Esophagus muscularis mucosa (tissue), 4 donors: ENCODE measurements at regions of chr1 and their contacts with region 1.

Region 1: GRCh38 chr1:89483010-89483756 is 41.4 kb upstream of the LRRC8B start:
- DNase-seq: no peak
- H3K4me3 ChIP-seq: no peak overlapping the region
- H3K27ac ChIP-seq: no peak overlapping the region
- H3K4me1 ChIP-seq: no peaks in the 10 kb centered on the region
- H3K27me3 ChIP-seq: no peaks in the 10 kb centered on the region
- CTCF ChIP-seq: peak; percentile 55 to 73 (median 69)
- EP300 ChIP-seq: no peak
- POLR2A ChIP-seq: no peak

Region 2: DNA sequence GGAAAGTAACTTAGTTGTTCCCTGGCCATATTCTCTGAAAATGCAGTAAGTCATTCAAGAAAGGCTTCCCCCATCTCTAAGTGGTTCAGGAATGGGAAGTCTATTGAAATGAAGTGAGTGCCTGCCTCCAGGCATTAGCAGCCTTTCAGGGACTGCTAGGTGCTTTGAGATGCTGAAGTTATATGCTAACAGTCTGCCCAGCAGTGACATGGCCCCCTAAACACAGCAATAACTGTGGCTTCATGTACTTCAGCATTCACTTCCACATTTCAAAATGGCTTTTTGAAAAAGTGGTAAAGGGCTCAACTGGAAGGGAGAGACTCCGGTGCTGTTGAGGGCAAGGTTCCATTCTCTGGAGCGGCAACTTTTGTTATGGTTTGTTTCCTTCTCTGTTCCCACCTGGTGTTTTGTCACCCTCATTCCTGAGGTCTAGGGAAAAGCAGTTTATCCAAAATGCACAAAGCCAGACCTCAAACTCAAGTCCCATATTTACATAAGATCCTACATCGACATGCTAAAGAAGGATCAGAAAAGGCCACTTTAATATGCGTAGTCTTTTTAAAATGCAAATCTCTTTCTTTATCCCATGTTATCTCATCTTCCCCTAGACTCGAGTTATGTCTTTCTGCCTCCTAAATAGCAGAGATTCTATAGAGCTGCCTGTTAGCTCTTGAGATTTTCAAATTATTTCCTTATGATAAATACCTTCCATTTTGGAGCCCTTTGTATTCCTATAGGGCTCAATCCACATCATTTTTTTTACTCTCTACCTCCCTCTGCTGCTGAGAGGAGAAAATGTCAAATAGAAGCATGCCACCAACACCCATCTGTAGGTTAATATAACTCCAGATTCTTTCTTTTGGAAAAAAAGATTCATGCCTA is 115.5 kb after region 1 on chr1:
- intact Hi-C with region 1: loop called (anchors 2 kb)
- DNase-seq: no peak
- H3K4me3 ChIP-seq: no peak overlapping the region
- H3K27ac ChIP-seq: no peak overlapping the region
- H3K4me1 ChIP-seq: peaks cover 0 to 4% (median 0%) of the 10 kb centered on the region in 4 donors
- H3K27me3 ChIP-seq: no peaks in the 10 kb centered on the region
- CTCF ChIP-seq: peak; percentile 65 to 66 (median 66)
- EP300 ChIP-seq: no peak
- POLR2A ChIP-seq: no peak

Region 3: DNA sequence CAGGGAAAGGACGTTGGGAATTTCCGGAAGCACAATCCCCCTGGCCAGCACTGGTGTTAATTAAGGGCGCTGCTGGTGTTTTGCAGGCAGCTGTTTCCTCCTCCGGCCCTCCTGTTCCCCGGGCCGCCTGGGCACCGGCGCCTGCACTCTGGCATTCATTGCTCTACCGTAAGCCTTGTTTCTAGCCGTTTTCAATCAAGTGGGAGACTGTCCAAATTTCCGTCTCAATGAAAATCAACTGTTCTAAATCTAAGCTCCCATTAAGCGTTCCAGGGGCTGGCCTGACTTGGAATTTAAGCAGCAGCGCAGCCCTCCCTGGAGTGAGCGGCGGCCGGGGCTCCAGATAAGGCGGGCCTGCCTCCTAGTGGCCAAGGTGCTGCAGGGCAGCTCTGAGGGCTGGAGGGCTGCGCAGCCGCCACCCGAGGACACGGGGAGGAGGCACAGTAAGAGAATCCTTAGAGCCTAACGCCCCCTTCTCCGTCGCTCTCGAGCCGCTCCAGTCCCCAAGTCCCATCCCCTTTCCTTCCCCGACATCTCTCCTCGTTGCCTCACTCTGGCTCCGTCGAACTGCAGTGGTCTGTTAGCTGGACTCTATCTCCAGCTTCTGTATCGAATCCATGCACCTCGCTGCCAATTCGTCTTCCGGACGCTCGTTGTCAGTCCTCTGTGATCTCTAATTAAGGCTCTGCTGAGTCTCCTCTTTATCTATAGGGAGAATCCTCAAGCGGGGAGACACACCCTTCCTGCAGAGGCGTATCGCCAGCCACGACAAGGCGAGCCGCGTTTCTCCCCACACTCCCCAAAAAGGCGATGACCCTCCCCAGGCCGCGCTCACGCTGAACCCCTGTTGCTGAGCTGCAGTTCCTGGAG is 279.8 kb after region 1 on chr1:
- intact Hi-C with region 1: loop called (anchors 5 kb)
- DNase-seq: peak; percentile 96
- H3K4me3 ChIP-seq: peak overlapping the region; percentile 50 to 65 (median 56)
- H3K27ac ChIP-seq: peak overlapping the region; percentile 57 to 63 (median 60)
- H3K4me1 ChIP-seq: peaks cover 23 to 45% (median 32%) of the 10 kb centered on the region in 4 donors
- H3K27me3 ChIP-seq: no peaks in the 10 kb centered on the region
- CTCF ChIP-seq: peak; percentile 93 to 100 (median 97)
- EP300 ChIP-seq: no peak
- POLR2A ChIP-seq: no peak